ENCODE measurements at regions of chr20 and their contacts with region 1.

Region 1: DNA sequence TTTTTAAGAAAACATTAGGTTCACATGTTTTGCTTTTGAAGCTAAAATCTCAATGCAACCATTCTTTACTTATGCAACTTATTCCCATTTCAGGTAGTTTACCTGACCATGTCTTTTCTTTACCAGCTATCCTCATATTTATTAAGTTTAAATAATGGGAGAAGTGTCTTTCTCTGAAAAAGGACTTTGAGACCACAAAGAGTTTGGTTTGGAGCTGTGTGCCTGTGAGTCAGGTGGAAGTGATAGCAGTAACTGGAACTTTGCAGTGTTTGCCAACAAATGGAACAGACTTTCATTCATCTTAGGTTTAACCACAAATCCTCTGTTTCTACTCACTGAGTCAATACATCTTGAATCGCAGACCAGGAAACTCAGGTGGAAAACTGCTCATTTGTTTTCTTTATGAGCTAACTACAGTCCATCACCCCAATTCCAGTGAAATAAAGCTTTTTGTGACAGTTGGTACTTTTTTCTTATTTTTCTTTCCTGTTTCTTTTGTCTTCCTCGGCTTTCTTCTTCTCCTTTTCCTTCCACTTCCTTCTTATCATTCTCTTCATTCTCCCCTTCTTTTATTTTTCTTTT is 148.3 kb upstream of the RIN2 start:
- DNase-seq: no peak
- ATAC-seq: no peak
- H3K4me3 ChIP-seq: no peak overlapping the region
- H3K4me3 Mint-ChIP-seq: no peak overlapping the region
- H3K27ac ChIP-seq: no peak overlapping the region
- H3K27ac Mint-ChIP-seq: no peak overlapping the region
- H3K4me1 ChIP-seq: no peaks in the 10 kb centered on the region
- H3K4me1 Mint-ChIP-seq: no peaks in the 10 kb centered on the region
- H3K27me3 ChIP-seq: no peaks in the 10 kb centered on the region
- H3K27me3 Mint-ChIP-seq: peaks cover 12% of the 10 kb centered on the region
- CTCF ChIP-seq: no peak

Region 2: GRCh38 chr20:19560881-19561480 is 48.8 kb before region 1 on chr20:
- CTCF ChIA-PET with region 1: no interaction called
- POLR2A ChIA-PET with region 1: no interaction called
- intact Hi-C with region 1: loop called in 1 of 2 experiments (anchors 2 kb)
- DNase-seq: no peak
- ATAC-seq: no peak
- H3K4me3 ChIP-seq: no peak overlapping the region
- H3K4me3 Mint-ChIP-seq: no peak overlapping the region
- H3K27ac ChIP-seq: no peak overlapping the region
- H3K27ac Mint-ChIP-seq: no peak overlapping the region
- H3K4me1 ChIP-seq: no peaks in the 10 kb centered on the region
- H3K4me1 Mint-ChIP-seq: no peaks in the 10 kb centered on the region
- H3K27me3 ChIP-seq: no peaks in the 10 kb centered on the region
- H3K27me3 Mint-ChIP-seq: peaks cover 4% of the 10 kb centered on the region
- CTCF ChIP-seq: no peak

Region 3: DNA sequence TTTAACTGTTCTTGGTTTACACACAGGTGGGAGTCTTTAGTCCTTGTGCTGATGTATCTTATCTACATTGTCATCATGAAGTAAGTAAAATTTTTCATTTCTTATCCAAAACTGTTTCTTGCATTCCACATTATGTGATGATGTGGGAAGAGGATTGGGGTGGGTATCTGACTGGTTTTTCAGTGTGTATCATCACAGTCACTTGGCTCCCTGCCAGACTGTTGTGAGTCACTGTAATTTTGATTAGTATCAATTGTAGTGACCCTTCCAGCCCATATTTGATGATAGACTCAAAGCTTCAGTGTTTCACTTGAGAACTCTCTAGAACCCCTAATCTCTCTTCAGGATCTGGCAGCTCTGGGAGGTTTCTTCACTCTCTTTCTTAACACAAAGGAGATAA is 63.8 kb after region 1 on chr20:
- CTCF ChIA-PET with region 1: no interaction called
- POLR2A ChIA-PET with region 1: no interaction called
- intact Hi-C with region 1: no loop called
- DNase-seq: no peak
- ATAC-seq: no peak
- H3K4me3 ChIP-seq: no peak overlapping the region
- H3K4me3 Mint-ChIP-seq: no peak overlapping the region
- H3K27ac ChIP-seq: no peak overlapping the region
- H3K27ac Mint-ChIP-seq: no peak overlapping the region
- H3K4me1 ChIP-seq: no peaks in the 10 kb centered on the region
- H3K4me1 Mint-ChIP-seq: no peaks in the 10 kb centered on the region
- H3K27me3 ChIP-seq: peaks cover 0 to 4% of the 10 kb centered on the region in 2 experiments
- H3K27me3 Mint-ChIP-seq: peaks cover 33% of the 10 kb centered on the region
- CTCF ChIP-seq: no peak